ENCODE measurements at regions of chr13 and their contacts with region 1.

Region 1: GRCh38 chr13:74287724-74288169 is 153.5 kb upstream of the KLF12 start:
- DNase-seq: peak; percentile 64 to 74
- H3K4me3 ChIP-seq: no peak overlapping the region
- H3K4me3 Mint-ChIP-seq: peak overlapping the region; percentile 63
- H3K27ac Mint-ChIP-seq: peak overlapping the region; percentile 96
- H3K4me1 ChIP-seq: peaks cover 10% of the 10 kb centered on the region
- H3K4me1 Mint-ChIP-seq: peaks cover 26% of the 10 kb centered on the region
- H3K27me3 ChIP-seq: no peaks in the 10 kb centered on the region
- H3K27me3 Mint-ChIP-seq: no peaks in the 10 kb centered on the region
- CTCF ChIP-seq: no peak

Region 2: GRCh38 chr13:73722120-73722519 is 565.6 kb before region 1 on chr13:
- CTCF ChIA-PET with region 1: no interaction called
- POLR2A ChIA-PET with region 1: no interaction called
- intact Hi-C with region 1: loop called (anchors 1 kb)
- DNase-seq: peak in 1 of 2 experiments; percentile 18
- H3K4me3 ChIP-seq: no peak overlapping the region
- H3K4me3 Mint-ChIP-seq: no peak overlapping the region
- H3K27ac Mint-ChIP-seq: no peak overlapping the region
- H3K4me1 ChIP-seq: no peaks in the 10 kb centered on the region
- H3K4me1 Mint-ChIP-seq: no peaks in the 10 kb centered on the region
- H3K27me3 ChIP-seq: no peaks in the 10 kb centered on the region
- H3K27me3 Mint-ChIP-seq: no peaks in the 10 kb centered on the region
- CTCF ChIP-seq: peak; percentile 14 to 39

Region 3: GRCh38 chr13:73835138-73835721 is 452.5 kb before region 1 on chr13:
- CTCF ChIA-PET with region 1: interaction called, 6 read pairs
- POLR2A ChIA-PET with region 1: no interaction called
- intact Hi-C with region 1: loop called (anchors 1 kb)
- DNase-seq: peak in 1 of 2 experiments; percentile 37
- H3K4me3 ChIP-seq: no peak overlapping the region
- H3K4me3 Mint-ChIP-seq: no peak overlapping the region
- H3K27ac Mint-ChIP-seq: no peak overlapping the region
- H3K4me1 ChIP-seq: peaks cover 10% of the 10 kb centered on the region; the same call in 1 of the 2 replicates
- H3K4me1 Mint-ChIP-seq: peaks cover 7% of the 10 kb centered on the region
- H3K27me3 ChIP-seq: no peaks in the 10 kb centered on the region
- H3K27me3 Mint-ChIP-seq: no peaks in the 10 kb centered on the region
- CTCF ChIP-seq: peak in 1 of 2 experiments; percentile 42

Region 4: GRCh38 chr13:73943137-73943964 is 344.4 kb before region 1 on chr13:
- CTCF ChIA-PET with region 1: no interaction called
- POLR2A ChIA-PET with region 1: no interaction called
- intact Hi-C with region 1: loop called (anchors 5 kb)
- DNase-seq: no peak
- H3K4me3 ChIP-seq: no peak overlapping the region
- H3K4me3 Mint-ChIP-seq: no peak overlapping the region
- H3K27ac Mint-ChIP-seq: no peak overlapping the region
- H3K4me1 ChIP-seq: no peaks in the 10 kb centered on the region; the same call in 1 of the 2 replicates
- H3K4me1 Mint-ChIP-seq: peaks cover 9% of the 10 kb centered on the region
- H3K27me3 ChIP-seq: no peaks in the 10 kb centered on the region
- H3K27me3 Mint-ChIP-seq: no peaks in the 10 kb centered on the region
- CTCF ChIP-seq: no peak

Region 5: DNA sequence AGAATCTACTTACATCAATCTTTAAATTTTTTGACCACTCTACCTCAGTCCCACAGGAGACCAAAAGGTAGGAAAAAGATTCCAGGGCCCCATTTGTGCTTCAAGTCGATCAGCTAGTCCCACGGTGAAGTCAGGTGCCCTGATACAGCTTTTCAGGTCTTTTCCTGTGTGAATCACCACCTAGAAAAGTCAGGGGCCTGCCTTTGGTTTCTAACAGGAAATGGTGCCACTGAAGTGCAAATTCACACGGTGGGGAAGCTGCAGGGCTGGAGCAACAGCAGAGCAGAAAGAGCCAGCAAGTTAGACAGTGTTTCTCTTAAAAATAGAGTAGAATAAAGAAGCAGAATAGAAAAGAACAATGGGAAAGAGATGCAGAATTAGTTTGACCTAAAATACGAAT is 261.0 kb before region 1 on chr13:
- CTCF ChIA-PET with region 1: interaction called, 30 read pairs
- POLR2A ChIA-PET with region 1: no interaction called
- intact Hi-C with region 1: loop called (anchors 1 kb)
- DNase-seq: no peak
- H3K4me3 ChIP-seq: no peak overlapping the region
- H3K4me3 Mint-ChIP-seq: no peak overlapping the region
- H3K27ac Mint-ChIP-seq: peak overlapping the region; percentile 75
- H3K4me1 ChIP-seq: peaks cover 80% of the 10 kb centered on the region
- H3K4me1 Mint-ChIP-seq: peaks cover 72% of the 10 kb centered on the region
- H3K27me3 ChIP-seq: no peaks in the 10 kb centered on the region
- H3K27me3 Mint-ChIP-seq: no peaks in the 10 kb centered on the region
- CTCF ChIP-seq: no peak

Region 6: GRCh38 chr13:74133657-74134201 is 154.0 kb before region 1 on chr13:
- CTCF ChIA-PET with region 1: interaction called, 14 read pairs
- POLR2A ChIA-PET with region 1: no interaction called
- intact Hi-C with region 1: loop called (anchors 1 kb)
- DNase-seq: peak; percentile 71 to 74
- H3K4me3 ChIP-seq: peak overlapping the region; percentile 94
- H3K4me3 Mint-ChIP-seq: no peak overlapping the region
- H3K27ac Mint-ChIP-seq: peak overlapping the region; percentile 67
- H3K4me1 ChIP-seq: peaks cover under 1% of the 10 kb centered on the region
- H3K4me1 Mint-ChIP-seq: peaks cover 8% of the 10 kb centered on the region
- H3K27me3 ChIP-seq: no peaks in the 10 kb centered on the region
- H3K27me3 Mint-ChIP-seq: no peaks in the 10 kb centered on the region
- CTCF ChIP-seq: no peak

Region 7: DNA sequence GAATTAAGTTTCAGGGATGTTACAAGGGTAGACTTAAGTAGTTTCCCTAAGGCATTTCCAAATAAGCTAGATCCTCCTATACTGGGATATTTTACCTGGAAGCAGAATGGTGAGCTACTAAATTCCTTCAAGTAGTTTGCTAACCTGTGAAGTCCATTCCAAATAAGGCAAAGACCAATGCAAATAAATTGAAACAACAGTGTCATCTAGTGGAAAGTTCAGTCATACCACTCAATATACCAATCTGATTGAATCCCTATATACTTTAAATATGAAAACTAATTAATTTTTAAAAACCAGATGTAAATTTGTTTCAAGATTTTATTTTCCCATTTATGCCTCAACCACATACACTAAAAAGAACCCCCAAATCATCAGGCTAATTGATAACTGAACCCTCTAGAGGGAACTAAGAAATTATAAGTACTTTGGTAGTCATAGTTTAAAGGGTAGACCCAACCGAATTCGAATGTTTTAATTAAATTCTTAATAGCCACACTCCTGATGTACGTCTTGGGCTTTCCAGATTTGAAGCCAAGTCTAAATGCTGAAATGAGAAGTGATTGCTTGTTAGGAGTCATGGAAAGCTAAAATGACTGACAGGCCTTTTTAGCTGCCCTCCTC is 970.5 kb after region 1 on chr13:
- CTCF ChIA-PET with region 1: interaction called, 5 read pairs
- POLR2A ChIA-PET with region 1: no interaction called
- intact Hi-C with region 1: loop called (anchors 1 kb)
- DNase-seq: peak in 1 of 2 experiments; percentile 43
- H3K4me3 ChIP-seq: no peak overlapping the region
- H3K4me3 Mint-ChIP-seq: no peak overlapping the region
- H3K27ac Mint-ChIP-seq: no peak overlapping the region
- H3K4me1 ChIP-seq: peaks cover 22% of the 10 kb centered on the region; the same call in 1 of the 2 replicates
- H3K4me1 Mint-ChIP-seq: peaks cover 24% of the 10 kb centered on the region
- H3K27me3 ChIP-seq: no peaks in the 10 kb centered on the region
- H3K27me3 Mint-ChIP-seq: no peaks in the 10 kb centered on the region
- CTCF ChIP-seq: peak; percentile 73 to 75

Measured in Caco-2 (cell line).